Esophagus muscularis mucosa (tissue), 4 donors: ENCODE measurements at regions of chr1 and their contacts with region 1.

Region 1: GRCh38 chr1:94805912-94806311 is 14.2 kb upstream of the SLC44A3 start:
- DNase-seq: peak; percentile 84
- H3K4me3 ChIP-seq: no peak overlapping the region
- H3K27ac ChIP-seq: no peak overlapping the region
- H3K4me1 ChIP-seq: peaks cover 23 to 42% (median 34%) of the 10 kb centered on the region in 4 donors
- H3K27me3 ChIP-seq: no peaks in the 10 kb centered on the region
- CTCF ChIP-seq: peak in 2 of 3 experiments; percentile 97 to 98
- EP300 ChIP-seq: no peak
- POLR2A ChIP-seq: no peak

Region 2: DNA sequence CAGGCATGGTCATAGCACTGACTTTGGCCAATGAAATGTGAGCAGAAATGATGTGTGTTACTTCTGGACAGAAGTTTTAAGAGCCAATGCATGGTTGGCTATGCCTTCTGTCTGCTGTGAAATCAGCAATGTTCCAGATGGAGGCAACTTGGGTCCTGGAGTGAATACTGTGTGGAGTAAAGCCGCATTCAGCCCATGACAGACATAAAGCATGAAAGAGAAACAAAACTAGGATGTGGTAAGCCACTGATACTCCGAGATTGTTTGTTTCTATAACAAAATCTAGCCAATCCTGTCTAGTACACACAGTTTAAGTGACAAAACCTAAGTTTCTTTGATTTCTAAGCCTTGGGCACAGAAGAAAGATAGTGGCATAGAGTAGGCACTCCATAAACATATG is 521.4 kb before region 1 on chr1:
- intact Hi-C with region 1: no loop called
- DNase-seq: no peak
- H3K4me3 ChIP-seq: no peak overlapping the region
- H3K27ac ChIP-seq: no peak overlapping the region
- H3K4me1 ChIP-seq: no peaks in the 10 kb centered on the region
- H3K27me3 ChIP-seq: no peaks in the 10 kb centered on the region
- CTCF ChIP-seq: no peak
- EP300 ChIP-seq: no peak
- POLR2A ChIP-seq: no peak

Region 3: DNA sequence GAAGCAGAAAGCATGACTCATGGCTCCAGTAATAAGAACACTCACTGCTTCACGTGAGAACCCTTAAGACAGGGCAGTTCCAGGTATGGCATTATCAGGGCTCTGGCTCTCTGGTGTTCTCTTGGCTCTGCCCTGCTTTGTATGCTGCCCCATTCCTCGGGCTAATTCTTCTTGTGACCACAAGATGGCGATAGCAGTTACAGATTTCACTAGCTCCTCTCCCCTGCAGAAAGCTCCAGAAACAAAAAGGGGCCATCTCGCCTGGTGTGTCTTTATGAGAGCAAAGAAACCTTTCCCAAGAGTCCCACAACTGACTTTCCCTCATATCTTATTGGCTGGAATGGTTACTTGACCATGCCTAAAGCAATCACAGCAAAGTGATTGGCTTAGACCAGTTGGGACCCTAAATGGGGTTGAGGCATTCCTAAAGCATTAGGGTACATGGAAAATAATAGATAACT is 324.4 kb before region 1 on chr1:
- intact Hi-C with region 1: loop called (anchors 2 kb)
- DNase-seq: no peak
- H3K4me3 ChIP-seq: no peak overlapping the region
- H3K27ac ChIP-seq: no peak overlapping the region
- H3K4me1 ChIP-seq: no peaks in the 10 kb centered on the region
- H3K27me3 ChIP-seq: no peaks in the 10 kb centered on the region
- CTCF ChIP-seq: peak; percentile 71 to 87 (median 79)
- EP300 ChIP-seq: no peak
- POLR2A ChIP-seq: no peak

Region 4: GRCh38 chr1:94522304-94522703 is 283.6 kb before region 1 on chr1:
- intact Hi-C with region 1: loop called (anchors 1 kb)
- DNase-seq: no peak
- H3K4me3 ChIP-seq: no peak overlapping the region
- H3K27ac ChIP-seq: no peak overlapping the region
- H3K4me1 ChIP-seq: peaks cover 0 to 9% (median 3%) of the 10 kb centered on the region in 4 donors
- H3K27me3 ChIP-seq: no peaks in the 10 kb centered on the region
- CTCF ChIP-seq: peak; percentile 42 to 54 (median 43)
- EP300 ChIP-seq: no peak
- POLR2A ChIP-seq: no peak